ENCODE measurements at regions of chr6 and their contacts with region 1.

Region 1: DNA sequence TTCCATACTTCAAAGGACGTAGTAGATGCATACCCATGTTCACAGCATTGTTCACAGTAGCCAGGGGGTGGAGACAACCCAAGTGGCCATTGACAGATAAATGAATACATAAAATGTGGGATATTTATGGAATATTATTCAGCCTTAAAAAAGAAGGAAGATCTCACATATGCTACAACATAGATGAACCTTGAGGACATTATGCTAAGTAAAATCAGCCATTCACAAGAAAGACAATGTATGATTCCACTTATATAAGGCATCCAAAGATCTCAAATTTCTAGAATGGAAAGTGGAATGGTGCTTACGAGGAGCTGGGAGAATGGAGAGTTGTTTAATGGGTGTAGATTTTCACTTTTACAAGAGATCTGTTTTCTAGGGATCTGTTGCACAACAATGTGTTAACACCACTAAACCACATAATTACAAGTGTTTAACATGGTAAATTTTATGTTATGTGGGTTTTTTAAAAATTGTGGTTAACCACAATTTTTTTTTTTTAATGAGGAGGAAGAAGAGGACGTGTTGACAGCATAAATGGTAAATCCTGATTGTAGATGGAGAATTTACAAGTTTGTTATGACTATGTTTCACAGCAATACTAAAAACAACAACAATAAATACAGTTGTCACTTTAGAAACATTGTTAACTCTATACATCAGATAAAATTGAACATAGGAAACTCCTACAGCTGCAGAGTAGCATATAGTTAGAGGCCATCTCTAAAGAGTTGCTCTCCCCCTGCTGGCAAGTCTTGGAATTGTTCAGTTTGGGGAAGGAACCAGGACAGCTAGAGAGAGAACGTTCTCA is 41.6 kb downstream of the CCN2 start:
- DNase-seq: peak; percentile 92
- H3K4me3 ChIP-seq: no peak overlapping the region
- H3K27ac ChIP-seq: no peak overlapping the region
- H3K4me1 ChIP-seq: no peaks in the 10 kb centered on the region
- H3K27me3 ChIP-seq: no peaks in the 10 kb centered on the region
- CTCF ChIP-seq: peak; percentile 82

Region 2: DNA sequence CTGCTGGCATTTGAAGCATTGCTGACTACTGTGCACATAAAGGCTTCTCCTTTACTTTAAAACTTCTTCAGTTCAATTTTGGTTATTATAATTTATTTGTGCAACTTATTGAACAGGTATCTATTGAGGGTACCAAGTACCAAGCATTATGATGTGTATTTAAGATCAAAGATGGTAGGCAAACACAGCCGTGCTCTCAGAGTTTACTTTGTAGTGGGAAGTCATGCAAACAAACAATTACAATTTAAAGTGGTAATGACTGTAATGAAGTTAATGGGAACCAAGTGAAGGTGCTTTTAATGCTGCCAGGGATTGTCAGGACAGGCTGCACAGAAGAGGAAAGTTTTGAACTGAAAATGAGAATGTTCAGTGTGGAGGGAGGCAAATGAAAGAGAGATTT is 675.5 kb before region 1 on chr6:
- intact Hi-C with region 1: no loop called
- DNase-seq: no peak
- H3K4me3 ChIP-seq: no peak overlapping the region
- H3K27ac ChIP-seq: no peak overlapping the region
- H3K4me1 ChIP-seq: no peaks in the 10 kb centered on the region
- H3K27me3 ChIP-seq: no peaks in the 10 kb centered on the region
- CTCF ChIP-seq: no peak

Region 3: DNA sequence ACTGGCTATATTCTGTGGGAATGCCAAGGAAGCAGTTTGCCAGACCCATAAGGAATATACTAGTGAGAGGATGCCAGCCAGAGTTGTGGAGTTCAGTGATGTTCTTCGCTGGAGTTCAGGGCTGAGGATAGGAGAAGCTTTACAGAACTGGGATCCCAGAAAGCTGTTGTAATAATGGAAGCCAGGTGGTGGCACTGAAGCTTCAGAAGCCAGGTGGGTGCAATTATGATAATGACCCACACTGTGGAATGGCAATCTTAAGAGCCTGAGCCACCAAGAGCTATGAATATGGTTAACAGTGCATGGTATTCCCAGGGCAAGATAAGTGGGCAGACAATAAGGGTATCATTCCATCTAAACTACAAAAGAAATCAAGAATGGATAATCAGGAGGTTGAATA is 126.8 kb before region 1 on chr6:
- intact Hi-C with region 1: loop called (anchors 2 kb)
- DNase-seq: peak; percentile 29
- H3K4me3 ChIP-seq: no peak overlapping the region
- H3K27ac ChIP-seq: no peak overlapping the region
- H3K4me1 ChIP-seq: no peaks in the 10 kb centered on the region
- H3K27me3 ChIP-seq: no peaks in the 10 kb centered on the region
- CTCF ChIP-seq: peak; percentile 25

Region 4: DNA sequence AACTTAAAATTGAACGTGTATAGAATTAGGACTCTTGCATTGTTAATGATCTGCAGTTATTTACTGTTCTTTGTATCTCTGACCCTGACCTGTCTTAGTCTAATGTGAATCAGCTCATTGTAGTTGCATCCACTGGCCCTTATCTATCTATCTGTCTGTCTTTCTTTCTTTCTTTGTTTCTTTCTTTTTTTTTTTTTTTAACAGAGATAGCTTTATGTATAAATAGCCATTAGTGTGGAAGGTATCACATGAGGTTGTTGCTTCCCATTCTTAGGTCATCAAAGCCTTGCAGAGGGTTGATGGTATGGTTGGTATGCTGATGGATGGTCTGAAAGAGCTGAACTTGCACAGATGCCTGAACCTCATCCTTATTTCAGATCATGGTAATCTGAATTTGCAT is 41.9 kb before region 1 on chr6:
- intact Hi-C with region 1: no loop called
- DNase-seq: no peak
- H3K4me3 ChIP-seq: no peak overlapping the region
- H3K27ac ChIP-seq: no peak overlapping the region
- H3K4me1 ChIP-seq: no peaks in the 10 kb centered on the region
- H3K27me3 ChIP-seq: no peaks in the 10 kb centered on the region
- CTCF ChIP-seq: no peak

Region 5: GRCh38 chr6:131877999-131878789 is 31.4 kb before region 1 on chr6:
- intact Hi-C with region 1: no loop called
- DNase-seq: no peak
- H3K4me3 ChIP-seq: no peak overlapping the region
- H3K27ac ChIP-seq: no peak overlapping the region
- H3K4me1 ChIP-seq: no peaks in the 10 kb centered on the region
- H3K27me3 ChIP-seq: no peaks in the 10 kb centered on the region
- CTCF ChIP-seq: no peak

Measured in colonic mucosa (tissue), 4 donors.